ENCODE measurements at regions of chr22 and their contacts with region 1.

Region 1: GRCh38 chr22:41621099-41621910 is at the start of gene XRCC6:
- DNase-seq: peak; percentile 100
- ATAC-seq: peak; percentile 85
- H3K4me3 ChIP-seq: peak within 1 kb of the TSS; percentile 95
- H3K27ac ChIP-seq: peak within 1 kb of the TSS; percentile 97
- H3K4me1 ChIP-seq: peaks cover 5% of the 10 kb centered on the region
- H3K27me3 ChIP-seq: no peaks in the 10 kb centered on the region
- CTCF ChIP-seq: 0 out of 6 replicates have a peak, but pooled peaks of 1 of the 3 experiments have one; percentile 5
- EP300 ChIP-seq: no peak; a peak in 1 of 4 replicates
- POLR2A ChIP-seq: peak; percentile 90
- RAD21 ChIP-seq: no peak
- polyA plus RNA-seq, gene XRCC6: 186 to 334 TPM

Region 2: DNA sequence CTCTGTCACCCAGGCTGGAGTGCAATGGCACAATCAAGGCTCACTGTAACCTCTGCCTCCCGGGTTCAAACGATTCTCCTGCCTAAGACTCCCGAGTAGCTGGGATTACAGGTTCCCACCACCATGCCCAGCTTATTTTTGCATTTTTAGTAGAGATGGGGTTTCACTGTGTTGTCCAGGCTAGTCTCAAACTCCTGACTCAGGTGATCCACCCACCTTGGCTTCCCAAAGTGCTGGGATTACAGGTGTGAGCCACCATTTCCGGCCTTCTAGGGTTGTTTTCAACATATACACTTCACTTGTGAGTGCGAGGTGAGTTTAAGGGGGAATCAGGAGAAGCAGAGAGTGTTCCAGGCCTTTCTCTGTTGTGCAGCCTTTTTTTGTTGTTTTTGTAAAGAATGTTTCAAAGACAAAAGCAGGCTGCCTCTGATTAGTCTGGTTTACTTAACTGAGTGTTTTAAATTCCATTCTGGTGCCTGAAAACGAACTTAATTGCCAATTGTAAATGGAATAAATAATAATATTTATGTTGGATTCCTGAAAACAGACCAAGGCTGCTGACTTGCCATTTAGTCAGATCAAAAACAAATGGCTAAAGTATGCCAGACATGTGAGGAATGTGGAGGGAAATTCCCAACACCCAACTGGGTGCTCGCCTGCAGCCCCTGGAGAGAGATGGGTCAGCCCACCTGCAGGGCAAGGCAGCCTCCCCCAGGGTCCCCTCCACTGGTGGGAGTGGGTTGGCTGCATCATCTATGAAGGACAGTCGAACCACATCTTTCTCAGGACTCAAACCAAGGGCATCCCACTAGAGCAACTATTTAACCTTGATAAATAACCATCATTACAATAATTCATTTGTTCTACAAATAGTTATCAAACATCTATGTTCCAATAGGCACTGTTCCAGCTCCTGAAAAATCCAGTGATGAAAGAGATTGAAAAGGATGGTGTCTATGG is 330.8 kb before region 1 on chr22:
- CTCF ChIA-PET with region 1: no interaction called
- POLR2A ChIA-PET with region 1: no interaction called
- RAD21 ChIA-PET with region 1: no interaction called
- SMC1A ChIA-PET with region 1: no interaction called
- in situ Hi-C with region 1: no loop called
- intact Hi-C with region 1: no loop called
- DNase-seq: no peak
- ATAC-seq: no peak
- H3K4me3 ChIP-seq: no peak overlapping the region
- H3K27ac ChIP-seq: no peak overlapping the region
- H3K4me1 ChIP-seq: peaks cover 5% of the 10 kb centered on the region; the same call in 1 of the 2 replicates
- H3K27me3 ChIP-seq: no peaks in the 10 kb centered on the region
- CTCF ChIP-seq: no peak
- EP300 ChIP-seq: no peak
- POLR2A ChIP-seq: no peak
- RAD21 ChIP-seq: no peak

Region 3: DNA sequence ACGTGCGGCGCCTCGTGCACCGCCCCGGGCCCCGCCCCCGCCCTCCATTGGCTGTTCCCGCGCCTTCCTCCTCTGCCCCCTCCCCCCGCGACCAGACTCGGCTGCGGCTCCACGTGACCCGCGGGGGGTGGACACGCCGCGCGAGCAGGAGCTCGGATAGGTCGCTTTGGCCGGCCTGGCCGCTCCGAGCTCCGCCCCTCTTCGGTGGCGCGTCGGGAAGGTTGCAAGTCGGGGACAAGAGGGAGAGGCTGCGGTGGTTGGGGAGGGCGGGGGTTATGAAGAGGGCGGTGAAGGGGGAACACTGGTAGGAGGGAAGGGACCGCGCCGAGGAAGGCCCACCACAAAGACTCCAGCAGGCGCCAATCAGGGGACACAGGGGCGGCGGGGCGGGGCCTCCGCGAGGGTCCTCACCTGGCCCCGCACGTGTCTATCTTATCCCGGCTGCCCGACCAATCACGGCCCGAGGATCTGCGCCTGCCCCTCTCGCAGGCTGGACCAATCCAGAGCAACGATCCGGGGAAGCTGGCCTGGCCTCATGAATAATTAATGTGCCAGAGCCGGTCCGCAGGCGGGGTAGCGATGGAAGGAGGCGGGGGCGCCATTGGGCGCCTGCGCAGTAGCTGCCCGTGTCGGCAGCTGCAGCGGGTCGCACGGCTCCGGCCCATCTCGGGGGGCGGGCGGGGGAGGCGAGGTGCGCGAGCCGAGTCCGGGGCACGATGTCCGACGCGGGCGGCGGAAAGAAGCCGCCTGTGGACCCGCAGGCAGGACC is 239.8 kb before region 1 on chr22 and contains the start of gene TEF:
- CTCF ChIA-PET with region 1: interaction called, 3 read pairs
- POLR2A ChIA-PET with region 1: interaction called, 15 read pairs
- RAD21 ChIA-PET with region 1: no interaction called
- SMC1A ChIA-PET with region 1: no interaction called
- in situ Hi-C with region 1: no loop called
- intact Hi-C with region 1: no loop called
- DNase-seq: peak; percentile 91
- ATAC-seq: peak; percentile 97
- H3K4me3 ChIP-seq: peak within 1 kb of the TSS; percentile 90
- H3K27ac ChIP-seq: peak within 1 kb of the TSS; percentile 74
- H3K4me1 ChIP-seq: peaks cover 7% of the 10 kb centered on the region
- H3K27me3 ChIP-seq: no peaks in the 10 kb centered on the region
- CTCF ChIP-seq: no peak
- EP300 ChIP-seq: no peak
- POLR2A ChIP-seq: peak; percentile 67
- RAD21 ChIP-seq: no peak
- polyA plus RNA-seq, gene TEF: 0.23 to 0.27 TPM

Region 4: DNA sequence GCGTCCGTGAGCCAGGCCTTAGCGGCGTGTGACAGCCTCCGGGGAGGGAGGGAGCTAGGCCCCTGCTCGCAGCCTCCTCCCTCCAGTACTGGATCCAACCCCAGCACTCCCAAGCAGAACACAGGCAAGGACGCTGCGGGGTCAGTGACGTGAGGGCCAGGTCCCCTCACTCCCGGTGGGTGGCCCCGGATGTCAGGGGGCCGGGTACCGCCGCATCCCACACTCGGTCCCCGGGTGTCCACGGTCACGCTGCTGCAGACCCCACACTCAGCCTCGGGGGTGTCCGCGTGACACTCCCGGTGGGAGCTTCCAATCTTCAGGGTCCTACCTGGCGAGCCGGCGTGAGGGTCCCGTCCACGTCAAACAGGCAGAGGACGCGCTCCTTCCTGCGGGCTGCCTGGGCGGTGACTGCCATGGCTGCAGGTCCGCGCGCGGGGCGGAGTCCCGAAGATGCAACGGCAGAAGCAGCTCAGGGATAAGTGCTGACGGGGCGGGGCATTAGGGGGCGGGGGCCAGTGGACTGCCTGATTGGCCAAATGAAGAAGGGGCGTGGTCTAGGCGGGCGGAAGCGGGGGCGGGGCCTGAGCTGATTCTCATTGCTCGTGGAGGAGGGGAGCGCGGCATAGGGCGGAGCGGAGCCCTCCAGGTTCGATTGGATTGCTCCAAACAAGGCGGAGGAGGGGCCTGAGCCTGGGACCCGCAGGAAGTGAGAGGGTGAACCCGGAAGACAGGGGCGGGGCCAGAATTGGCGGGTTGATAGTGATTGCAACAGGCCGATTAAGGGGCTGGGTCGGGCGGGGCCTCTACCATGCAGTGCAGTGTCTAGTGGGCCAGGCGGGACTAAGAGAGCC is 31.7 kb before region 1 on chr22 and contains the start of gene PMM1:
- CTCF ChIA-PET with region 1: interaction called, 9 read pairs
- POLR2A ChIA-PET with region 1: interaction called, 74 read pairs
- RAD21 ChIA-PET with region 1: interaction called, 24 read pairs
- SMC1A ChIA-PET with region 1: interaction called, 6 read pairs
- in situ Hi-C with region 1: no loop called
- intact Hi-C with region 1: loop called (anchors 1 kb)
- DNase-seq: peak; percentile 98
- ATAC-seq: peak; percentile 98
- H3K4me3 ChIP-seq: peak within 1 kb of the TSS; percentile 94
- H3K27ac ChIP-seq: peak within 1 kb of the TSS; percentile 66
- H3K4me1 ChIP-seq: peaks cover 3% of the 10 kb centered on the region; the same call in 1 of the 2 replicates
- H3K27me3 ChIP-seq: no peaks in the 10 kb centered on the region
- CTCF ChIP-seq: no peak
- EP300 ChIP-seq: no peak
- POLR2A ChIP-seq: peak; percentile 96
- RAD21 ChIP-seq: no peak
- polyA plus RNA-seq, gene PMM1: 10.5 to 16.1 TPM

Region 5: DNA sequence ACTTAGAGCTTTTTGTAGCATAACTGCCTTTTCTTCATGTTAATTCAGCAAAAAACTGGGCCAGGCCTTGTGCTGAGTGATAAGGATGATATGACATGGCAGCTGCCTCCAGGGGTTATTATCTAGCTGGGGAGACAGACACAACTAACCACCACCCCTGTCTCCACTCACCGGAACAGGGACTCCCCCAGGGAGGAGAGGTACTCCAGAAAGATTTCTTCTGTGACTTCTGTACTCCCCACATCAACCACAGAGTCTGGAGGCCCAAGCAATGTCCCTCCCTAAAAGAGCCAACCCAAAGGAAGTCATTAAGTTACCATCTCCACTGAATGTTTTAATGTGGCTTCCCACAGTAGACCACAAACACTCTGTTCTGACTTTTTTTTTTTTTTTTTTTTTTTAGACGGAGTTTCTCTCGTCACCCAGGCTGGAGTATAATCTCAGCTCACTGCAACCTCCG is 17.4 kb before region 1 on chr22:
- CTCF ChIA-PET with region 1: interaction called, 29 read pairs
- POLR2A ChIA-PET with region 1: interaction called, 23 read pairs
- RAD21 ChIA-PET with region 1: interaction called, 9 read pairs
- SMC1A ChIA-PET with region 1: interaction called, 19 read pairs
- in situ Hi-C with region 1: no loop called
- intact Hi-C with region 1: no loop called
- DNase-seq: peak; percentile 91
- ATAC-seq: peak; percentile 99
- H3K4me3 ChIP-seq: no peak overlapping the region
- H3K27ac ChIP-seq: no peak overlapping the region
- H3K4me1 ChIP-seq: peaks cover 21% of the 10 kb centered on the region
- H3K27me3 ChIP-seq: no peaks in the 10 kb centered on the region
- CTCF ChIP-seq: no peak
- EP300 ChIP-seq: peak in 1 of 2 experiments; percentile 79; a peak in 1 of 4 replicates
- POLR2A ChIP-seq: no peak
- RAD21 ChIP-seq: no peak

Region 6: GRCh38 chr22:41780746-41781505 is 159.6 kb after region 1 on chr22:
- CTCF ChIA-PET with region 1: no interaction called
- POLR2A ChIA-PET with region 1: interaction called, 13 read pairs
- RAD21 ChIA-PET with region 1: no interaction called
- SMC1A ChIA-PET with region 1: no interaction called
- in situ Hi-C with region 1: no loop called
- intact Hi-C with region 1: no loop called
- DNase-seq: peak; percentile 90
- ATAC-seq: peak; percentile 97
- H3K4me3 ChIP-seq: peak overlapping the region; percentile 76
- H3K27ac ChIP-seq: peak overlapping the region; percentile 54
- H3K4me1 ChIP-seq: peaks cover 11% of the 10 kb centered on the region
- H3K27me3 ChIP-seq: no peaks in the 10 kb centered on the region
- CTCF ChIP-seq: no peak
- EP300 ChIP-seq: peak in 1 of 2 experiments; percentile 34; a peak in 1 of 4 replicates
- POLR2A ChIP-seq: peak; percentile 81
- RAD21 ChIP-seq: no peak

Measured in GM12878 (cell line).